Aorta (tissue), 5 donors: ENCODE measurements at regions of chr15 and their contacts with region 1.

Region 1: DNA sequence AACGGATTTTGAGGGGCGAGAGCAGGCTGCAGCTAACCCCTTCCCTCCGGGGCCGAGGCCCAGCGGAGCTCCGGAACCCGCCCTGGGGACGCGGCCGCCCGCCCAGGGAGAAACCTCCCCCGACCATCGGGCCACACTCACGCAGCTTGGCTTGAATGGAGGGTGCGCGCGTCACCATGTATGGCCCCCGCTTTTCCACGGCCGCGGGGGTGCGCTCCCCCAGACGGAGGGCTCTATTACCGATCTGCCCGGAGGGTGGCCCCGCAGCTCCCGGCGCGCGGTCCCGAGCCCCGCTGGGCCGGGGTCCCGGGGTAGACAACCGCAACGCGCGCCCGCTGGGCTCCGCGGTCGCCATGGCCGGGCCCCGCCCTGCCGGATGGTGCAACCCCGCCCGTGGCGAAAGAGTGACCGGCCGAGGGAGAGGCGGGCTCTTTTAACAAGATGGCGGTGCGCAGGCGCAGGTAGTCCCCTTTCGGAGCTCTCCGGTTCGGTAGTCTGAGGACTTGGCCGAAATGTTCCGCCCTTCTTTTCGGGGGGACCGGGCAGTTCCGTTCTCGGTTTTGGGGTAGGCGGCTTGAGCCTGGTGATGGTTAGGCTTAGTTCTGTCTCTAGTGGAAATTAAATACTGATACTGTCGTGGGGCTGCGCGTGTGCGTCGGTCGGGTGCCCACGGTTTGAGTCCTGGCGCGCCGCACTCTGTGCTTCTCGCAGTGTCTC is at the start of gene FAM219B:
- DNase-seq: peak; percentile 96 to 98
- ATAC-seq: peak; percentile 98
- H3K4me3 ChIP-seq: peak within 1 kb of the TSS; percentile 71 to 91
- H3K27ac ChIP-seq: peak within 1 kb of the TSS; percentile 69 to 78
- H3K4me1 ChIP-seq: no peaks in the 10 kb centered on the region
- H3K27me3 ChIP-seq: no peaks in the 10 kb centered on the region
- total RNA-seq, gene FAM219B: 64.7 to 88.4 TPM

Region 2: DNA sequence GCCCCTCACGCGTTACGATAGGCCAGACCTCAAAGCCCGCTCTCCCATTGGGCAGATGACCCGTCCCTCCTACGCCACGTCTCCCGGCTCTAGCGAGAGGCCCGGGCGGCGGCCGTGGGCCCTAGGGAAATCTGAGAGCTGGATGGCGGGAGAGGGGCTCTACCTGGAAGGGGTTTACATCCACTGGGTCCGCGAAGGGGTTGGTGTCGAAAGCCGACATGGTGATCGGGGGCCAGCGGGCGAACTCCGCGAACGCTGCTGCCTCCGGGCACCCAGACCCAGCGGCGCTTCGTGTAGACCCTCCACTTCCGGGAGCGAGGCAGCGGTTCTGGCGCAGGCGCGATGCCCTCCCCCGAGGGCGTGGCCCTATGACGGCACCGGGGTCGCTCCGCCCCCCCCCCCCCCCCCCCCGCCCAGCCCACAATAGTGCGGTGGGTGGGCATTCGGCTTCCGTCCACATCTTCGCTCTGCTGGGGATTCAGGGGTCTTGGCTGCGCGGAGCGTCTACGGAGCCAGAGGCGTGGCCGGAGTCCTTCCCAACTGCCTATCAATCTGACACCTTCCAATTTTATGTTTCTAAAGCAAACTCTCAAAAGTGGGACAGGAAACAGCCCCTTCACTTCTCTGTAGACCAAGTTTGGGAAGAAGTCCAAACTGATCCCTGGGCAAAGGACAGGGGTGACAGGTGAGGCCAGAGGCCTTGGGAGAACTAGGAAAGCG is 33.4 kb before region 1 on chr15 and contains the start of gene SCAMP2:
- intact Hi-C with region 1: loop called in 1 of 2 experiments (anchors 5 kb)
- DNase-seq: peak; percentile 96 to 98
- ATAC-seq: peak; percentile 97
- H3K4me3 ChIP-seq: peak within 1 kb of the TSS; percentile 70 to 76
- H3K27ac ChIP-seq: peak within 1 kb of the TSS in 1 of 2 donors; percentile 60
- H3K4me1 ChIP-seq: peaks cover 0 to 2% of the 10 kb centered on the region in 2 donors
- H3K27me3 ChIP-seq: no peaks in the 10 kb centered on the region
- total RNA-seq, gene SCAMP2: 62.2 to 65.0 TPM

Region 3: DNA sequence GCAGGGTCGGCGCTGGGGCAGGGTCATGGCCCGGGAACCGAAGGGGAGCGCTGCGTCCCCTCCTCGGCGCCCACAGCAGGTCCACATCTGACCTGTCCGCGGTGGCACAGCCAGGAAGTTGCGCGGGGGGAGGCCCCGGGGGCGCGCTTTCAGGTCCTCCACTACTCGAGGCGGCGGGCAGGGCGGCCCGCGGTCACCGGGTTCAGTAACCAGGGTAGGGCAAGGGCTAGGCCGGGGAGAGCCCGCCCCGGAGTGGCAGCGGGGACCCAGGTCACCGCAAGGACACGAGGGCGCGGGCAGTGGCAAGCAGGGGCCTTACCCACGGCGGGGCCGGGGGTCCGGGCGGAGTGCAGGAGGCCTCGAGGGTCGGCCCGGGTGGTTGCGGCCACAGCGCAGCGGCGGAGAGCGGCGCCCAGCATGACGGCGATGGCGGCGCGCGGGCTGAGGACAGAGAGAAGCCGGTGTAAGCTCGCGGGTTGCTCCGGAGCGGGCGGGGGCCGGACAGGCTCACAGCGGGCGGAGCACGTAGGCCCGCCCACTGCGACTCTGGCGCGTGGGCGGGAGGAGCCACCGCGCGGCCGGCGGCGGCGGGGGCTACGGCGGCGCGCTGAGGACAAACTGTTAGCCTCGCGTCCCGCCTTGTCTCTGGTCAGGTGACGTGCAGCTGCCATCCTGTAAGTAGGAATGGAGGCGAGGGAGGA is 31.1 kb after region 1 on chr15 and contains the start of gene COX5A:
- intact Hi-C with region 1: loop called in 1 of 2 experiments (anchors 2 kb)
- DNase-seq: peak; percentile 96 to 97
- ATAC-seq: peak; percentile 99
- H3K4me3 ChIP-seq: peak within 1 kb of the TSS; percentile 65 to 77
- H3K27ac ChIP-seq: peak within 1 kb of the TSS in 1 of 2 donors; percentile 49
- H3K4me1 ChIP-seq: no peaks in the 10 kb centered on the region
- H3K27me3 ChIP-seq: no peaks in the 10 kb centered on the region
- total RNA-seq, gene COX5A: 72.6 to 79.6 TPM

Region 4: GRCh38 chr15:74950078-74951000 is 43.7 kb after region 1 on chr15:
- intact Hi-C with region 1: loop called in 1 of 2 experiments (anchors 5 kb)
- DNase-seq: peak; percentile 76 to 81
- ATAC-seq: peak; percentile 86
- H3K4me3 ChIP-seq: no peak overlapping the region
- H3K27ac ChIP-seq: no peak overlapping the region
- H3K4me1 ChIP-seq: no peaks in the 10 kb centered on the region
- H3K27me3 ChIP-seq: no peaks in the 10 kb centered on the region